ENCODE measurements at regions of chr17 and their contacts with region 1.

Region 1: GRCh38 chr17:42832974-42833766 is at the start of gene PSME3:
- DNase-seq: peak; percentile 92
- H3K4me3 Mint-ChIP-seq: peak within 1 kb of the TSS; percentile 95
- H3K27ac Mint-ChIP-seq: peak within 1 kb of the TSS; percentile 97
- H3K4me1 Mint-ChIP-seq: peaks cover 22% of the 10 kb centered on the region
- H3K27me3 Mint-ChIP-seq: no peaks in the 10 kb centered on the region
- total RNA-seq, gene PSME3: 84.7 to 87.0 TPM

Region 2: GRCh38 chr17:42723636-42724035 is 109.5 kb before region 1 on chr17:
- CTCF ChIA-PET with region 1: no interaction called
- intact Hi-C with region 1: no loop called
- DNase-seq: no peak
- H3K4me3 Mint-ChIP-seq: no peak overlapping the region
- H3K27ac Mint-ChIP-seq: no peak overlapping the region
- H3K4me1 Mint-ChIP-seq: no peaks in the 10 kb centered on the region
- H3K27me3 Mint-ChIP-seq: no peaks in the 10 kb centered on the region

Region 3: DNA sequence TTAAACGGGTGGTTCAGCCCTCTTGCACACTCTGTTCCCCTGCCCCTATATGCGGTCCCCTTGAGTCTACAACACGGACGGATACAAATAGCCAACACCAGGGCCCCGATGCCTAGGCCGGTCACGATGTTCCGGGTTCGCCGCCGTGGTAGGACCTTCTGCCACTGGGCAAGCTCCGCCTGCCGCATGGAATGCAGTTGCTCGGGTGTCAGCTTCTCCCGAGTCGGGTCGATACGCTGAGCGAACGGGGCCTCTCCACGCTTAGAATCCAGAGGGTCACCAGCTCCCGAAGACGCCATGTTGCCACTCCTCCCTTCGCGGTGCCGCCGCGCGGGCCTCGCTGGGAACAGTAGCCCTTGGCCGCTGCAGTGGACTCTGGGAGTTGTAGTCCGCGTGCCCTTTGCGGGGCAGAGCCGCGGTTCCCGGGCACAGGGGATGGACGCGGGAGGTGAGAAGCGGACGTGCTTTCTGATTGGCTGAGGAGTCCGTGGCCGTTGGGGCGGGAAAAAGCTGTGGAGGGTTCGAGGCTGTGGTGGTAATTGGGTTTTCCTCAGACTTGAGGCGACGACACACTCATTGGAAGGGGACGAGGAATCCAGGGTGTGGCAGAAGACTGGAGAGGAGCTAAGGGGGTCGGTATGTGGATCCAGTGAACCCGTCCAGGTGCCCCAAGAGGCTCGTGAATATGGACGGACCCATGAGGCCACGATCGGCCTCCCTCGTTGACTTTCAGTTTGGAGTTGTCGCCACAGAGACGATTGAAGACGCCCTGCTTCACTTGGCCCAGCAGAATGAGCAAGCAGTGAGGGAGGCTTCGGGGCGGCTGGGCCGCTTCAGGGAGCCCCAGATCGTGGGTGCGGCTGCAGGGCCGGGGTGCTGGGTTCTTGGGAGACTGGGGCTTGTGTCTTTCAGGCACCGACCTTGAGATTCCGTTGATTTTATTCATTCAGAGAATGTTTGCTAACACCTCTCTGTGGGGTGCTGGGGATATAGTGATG is 34.5 kb before region 1 on chr17 and contains the starts of genes CNTD1 and COA3:
- CTCF ChIA-PET with region 1: no interaction called
- intact Hi-C with region 1: loop called (anchors 1 kb)
- DNase-seq: peak; percentile 90
- H3K4me3 Mint-ChIP-seq: peak within 1 kb of the TSS; percentile 91
- H3K27ac Mint-ChIP-seq: peak within 1 kb of the TSS; percentile 62
- H3K4me1 Mint-ChIP-seq: peaks cover 21% of the 10 kb centered on the region
- H3K27me3 Mint-ChIP-seq: no peaks in the 10 kb centered on the region
- total RNA-seq, gene CNTD1: not detected
- total RNA-seq, gene COA3: 23.7 to 24.4 TPM

Region 4: DNA sequence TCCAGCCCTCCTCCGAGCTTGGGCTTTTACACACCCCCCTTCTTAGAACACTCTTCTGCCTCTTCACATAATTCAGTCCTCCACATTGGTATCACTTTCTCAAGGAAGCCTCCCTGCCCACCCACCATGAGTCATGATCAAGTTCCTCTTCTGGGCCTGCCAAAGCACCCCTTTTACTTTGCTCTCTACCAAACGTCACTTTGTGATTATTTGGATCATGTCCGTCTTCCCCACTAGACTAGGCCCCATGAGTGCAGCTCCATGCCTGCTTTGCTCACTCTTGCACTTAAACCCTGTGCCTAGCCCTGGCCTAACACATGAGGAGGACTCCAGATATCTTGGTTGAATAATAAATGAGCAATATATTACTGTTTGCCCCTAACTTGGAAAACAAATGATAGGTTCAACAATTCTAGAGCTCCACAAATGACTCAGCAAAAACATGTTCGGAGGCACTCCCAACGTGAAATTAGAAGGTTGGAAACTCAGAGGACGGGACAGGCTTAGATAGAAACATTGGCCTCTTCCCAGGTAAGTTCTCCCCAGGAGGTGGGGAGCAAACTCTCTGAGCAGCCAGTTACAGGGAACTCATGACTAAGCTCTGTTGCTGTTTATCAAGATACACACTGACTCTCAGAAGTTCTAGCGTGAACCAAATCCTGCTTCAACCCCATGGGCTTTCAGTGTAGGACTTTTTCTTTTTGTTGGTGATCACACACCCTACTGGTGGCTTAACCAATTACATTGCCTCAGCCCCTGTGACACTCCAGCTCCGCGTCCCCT is 95.7 kb after region 1 on chr17:
- CTCF ChIA-PET with region 1: interaction called, 5 read pairs
- intact Hi-C with region 1: loop called (anchors 5 kb)
- DNase-seq: peak; percentile 40
- H3K4me3 Mint-ChIP-seq: no peak overlapping the region
- H3K27ac Mint-ChIP-seq: peak overlapping the region; percentile 3
- H3K4me1 Mint-ChIP-seq: peaks cover 10% of the 10 kb centered on the region
- H3K27me3 Mint-ChIP-seq: peaks cover under 1% of the 10 kb centered on the region

Region 5: DNA sequence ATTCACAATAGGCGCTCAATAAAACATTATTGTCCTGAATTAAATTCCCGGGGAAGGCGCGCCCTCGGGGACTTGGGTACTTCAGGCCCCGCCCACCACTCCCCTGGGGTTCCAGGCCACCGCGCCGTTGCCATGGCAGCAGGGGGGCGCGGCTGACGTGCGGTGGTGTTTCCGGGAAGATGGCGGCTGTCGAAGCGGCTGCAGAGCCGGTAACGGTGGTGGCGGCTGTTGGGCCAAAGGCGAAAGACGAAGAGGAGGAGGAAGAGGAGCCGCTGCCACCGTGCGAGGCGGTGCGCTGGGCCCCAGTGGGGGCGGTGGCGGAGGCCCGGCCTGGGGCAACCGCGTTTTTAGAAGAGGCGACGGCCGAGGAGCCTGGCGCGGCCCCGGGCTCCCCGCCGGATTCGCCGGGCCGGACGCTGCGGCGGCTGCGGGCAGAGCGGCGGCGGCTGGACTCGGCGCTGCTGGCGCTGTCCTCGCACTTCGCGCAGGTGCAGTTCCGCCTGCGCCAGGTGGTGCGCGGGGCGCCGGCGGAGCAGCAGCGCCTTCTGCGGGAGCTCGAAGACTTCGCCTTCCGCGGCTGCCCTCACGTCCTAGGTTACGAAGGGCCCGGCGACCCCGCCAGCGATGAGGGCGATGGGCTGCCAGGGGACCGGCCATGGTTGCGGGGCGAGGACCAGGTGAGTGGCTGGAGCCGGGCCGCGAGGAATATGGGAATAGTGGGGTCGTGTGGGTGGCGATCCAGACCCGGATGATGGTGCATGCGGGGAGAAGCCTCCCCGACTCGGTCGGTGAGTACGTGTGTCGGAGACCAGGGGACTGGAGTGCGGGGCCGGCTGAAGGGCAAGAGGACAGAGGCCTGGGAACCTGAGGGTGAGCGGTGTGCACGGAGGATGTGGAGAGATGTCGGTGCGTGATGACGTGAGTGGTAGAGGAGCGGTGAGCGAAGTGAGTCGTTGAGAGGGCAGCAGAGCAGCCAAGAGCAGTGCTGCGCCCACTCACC is 147.5 kb after region 1 on chr17 and contains the start of gene RUNDC1:
- CTCF ChIA-PET with region 1: no interaction called
- intact Hi-C with region 1: loop called (anchors 2 kb)
- DNase-seq: peak; percentile 90
- H3K4me3 Mint-ChIP-seq: peak within 1 kb of the TSS; percentile 99
- H3K27ac Mint-ChIP-seq: peak within 1 kb of the TSS; percentile 90
- H3K4me1 Mint-ChIP-seq: peaks cover 36% of the 10 kb centered on the region
- H3K27me3 Mint-ChIP-seq: no peaks in the 10 kb centered on the region
- total RNA-seq, gene RUNDC1: 5.9 to 6.5 TPM